HEK293 (cell line): ENCODE measurements at regions of chr16 and their contacts with region 1.

Region 1: DNA sequence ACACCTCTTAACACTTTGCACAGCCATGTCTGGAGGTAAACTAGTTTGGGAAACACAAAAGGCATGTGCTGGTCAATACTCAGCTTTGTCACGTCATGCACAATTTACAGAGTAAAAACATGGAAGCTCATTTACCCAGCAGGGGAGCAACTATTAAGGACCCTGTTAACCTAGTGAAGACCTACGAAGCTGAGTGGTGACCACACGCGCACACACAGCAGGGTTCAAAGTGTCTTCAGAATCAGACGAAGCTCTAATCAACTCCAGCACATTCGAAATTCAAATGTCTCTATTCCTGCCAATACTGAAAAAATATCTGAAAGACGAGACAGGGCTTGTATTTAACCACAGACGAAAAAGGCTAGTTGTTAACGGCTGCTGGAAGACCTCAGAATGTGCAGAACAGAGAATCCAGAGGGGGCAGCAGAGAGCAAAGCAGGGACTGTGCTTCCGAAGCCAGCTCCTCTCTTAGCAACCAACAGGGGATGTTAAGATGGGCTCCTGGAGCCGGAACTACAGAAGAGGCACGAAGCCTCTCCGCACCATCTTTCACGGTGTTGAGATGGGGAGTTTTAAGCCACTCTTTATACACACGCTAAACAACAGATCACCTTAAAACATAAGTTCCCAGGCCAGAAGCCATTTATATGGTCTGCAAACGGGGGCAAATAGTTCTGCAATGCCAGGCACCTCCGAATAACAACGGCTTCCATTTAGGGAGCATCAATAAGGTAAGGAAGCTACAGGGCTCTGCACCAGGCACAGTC is 45.7 kb downstream of the CMTM4 start:
- H3K4me3 ChIP-seq: no peak overlapping the region
- H3K27ac ChIP-seq: no peak overlapping the region; the same call in 1 of the 2 replicates
- H3K4me1 ChIP-seq: peaks cover 5% of the 10 kb centered on the region
- CTCF ChIP-seq: peak; percentile 87

Region 2: GRCh38 chr16:66483689-66484481 is 167.0 kb before region 1 on chr16:
- CTCF ChIA-PET with region 1: no interaction called
- POLR2A ChIA-PET with region 1: no interaction called
- H3K4me3 ChIP-seq: no peak overlapping the region
- H3K27ac ChIP-seq: no peak overlapping the region
- H3K4me1 ChIP-seq: no peaks in the 10 kb centered on the region
- CTCF ChIP-seq: peak; percentile 93

Region 3: DNA sequence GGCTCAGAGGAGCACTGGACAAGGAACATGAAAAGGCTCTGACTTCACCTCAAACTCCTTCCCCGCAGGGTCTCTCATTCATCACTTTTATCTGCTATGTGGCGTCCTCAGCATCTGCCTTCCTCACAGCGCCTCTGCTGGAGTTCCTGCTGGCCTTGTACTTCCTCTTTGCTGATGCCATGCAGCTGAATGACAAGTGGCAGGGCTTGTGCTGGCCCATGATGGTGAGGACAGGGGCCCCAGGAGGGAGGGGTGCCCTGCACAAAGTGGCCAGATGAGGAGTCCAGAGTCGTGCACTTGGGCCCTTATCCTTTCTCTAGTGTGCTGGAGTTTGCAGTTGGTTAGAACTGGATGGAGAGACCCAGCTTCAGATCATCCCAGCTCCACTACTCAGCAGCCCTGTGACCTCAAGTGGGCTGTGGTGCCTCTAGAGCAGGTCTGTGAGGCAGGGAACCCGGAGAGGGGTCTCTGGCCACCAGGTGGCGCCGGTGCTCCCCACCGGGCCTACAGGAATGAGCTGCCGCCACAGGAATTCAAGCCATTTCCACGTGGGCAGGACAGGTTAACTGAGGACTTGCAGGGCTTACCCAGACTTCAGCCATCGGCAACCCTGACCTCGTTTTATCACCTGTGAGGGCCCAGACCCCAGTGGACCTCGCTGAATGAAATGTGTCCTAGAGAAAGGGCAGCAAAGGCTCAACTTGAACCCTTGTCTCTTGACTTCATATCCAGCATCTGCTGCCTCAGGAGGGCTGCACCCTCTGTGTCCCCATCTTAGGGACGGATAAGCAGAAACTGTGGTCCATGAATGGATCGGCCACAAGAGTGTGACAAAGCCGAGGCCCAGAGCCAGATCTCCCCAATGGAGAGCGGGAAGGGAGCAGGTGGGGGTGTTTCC is 42.4 kb before region 1 on chr16:
- CTCF ChIA-PET with region 1: interaction called, 18 read pairs
- POLR2A ChIA-PET with region 1: no interaction called
- H3K4me3 ChIP-seq: no peak overlapping the region
- H3K27ac ChIP-seq: no peak overlapping the region
- H3K4me1 ChIP-seq: no peaks in the 10 kb centered on the region
- CTCF ChIP-seq: peak; percentile 93

Region 4: GRCh38 chr16:66618588-66619375 is 32.1 kb before region 1 on chr16:
- CTCF ChIA-PET with region 1: interaction called, 15 read pairs
- POLR2A ChIA-PET with region 1: no interaction called
- H3K4me3 ChIP-seq: no peak overlapping the region
- H3K27ac ChIP-seq: no peak overlapping the region
- H3K4me1 ChIP-seq: peaks cover 13% of the 10 kb centered on the region
- CTCF ChIP-seq: no peak

Region 5: DNA sequence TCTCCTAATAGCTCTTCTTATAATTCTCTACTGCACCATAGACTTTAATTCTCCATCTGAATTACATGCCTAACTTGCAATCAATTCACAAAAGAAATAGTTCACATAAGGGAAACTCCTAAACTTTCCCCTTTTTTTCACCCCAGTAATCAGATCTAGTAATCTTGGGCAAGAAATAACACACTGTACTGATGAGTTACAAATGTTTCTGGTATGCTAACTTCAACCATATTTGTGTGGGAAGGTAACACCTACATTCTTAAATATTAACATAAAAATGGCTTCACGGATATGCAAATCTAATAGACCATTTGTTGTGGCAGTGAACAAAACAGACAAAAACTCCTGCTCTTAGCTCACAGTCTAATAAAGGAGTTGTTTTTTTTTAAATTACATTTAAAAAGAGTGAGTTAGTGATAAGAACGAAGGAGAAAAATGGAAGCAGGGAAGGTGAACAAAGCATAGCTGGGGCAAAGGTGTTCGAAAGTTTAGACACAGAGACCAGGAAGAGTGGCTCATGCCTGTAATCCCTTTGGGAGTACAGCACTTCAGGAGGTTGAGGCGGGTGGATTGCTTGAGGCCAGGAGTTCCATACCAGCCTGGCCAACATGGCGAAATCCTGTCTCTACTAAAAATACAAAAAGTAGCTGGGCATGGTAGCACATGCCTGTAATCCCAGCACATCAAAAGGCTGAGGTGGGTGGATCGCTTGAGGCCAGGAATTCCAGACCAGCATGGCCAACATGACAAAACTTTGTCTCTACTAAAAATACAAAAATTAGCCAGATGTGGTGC is 11.6 kb before region 1 on chr16:
- CTCF ChIA-PET with region 1: interaction called, 32 read pairs
- POLR2A ChIA-PET with region 1: interaction called, 5 read pairs
- H3K4me3 ChIP-seq: no peak overlapping the region
- H3K27ac ChIP-seq: no peak overlapping the region
- H3K4me1 ChIP-seq: peaks cover 3% of the 10 kb centered on the region; the same call in 1 of the 2 replicates
- CTCF ChIP-seq: no peak

Region 6: GRCh38 chr16:66696669-66697630 is 46.1 kb after region 1 on chr16 and contains the start of gene CMTM4:
- CTCF ChIA-PET with region 1: interaction called, 23 read pairs
- POLR2A ChIA-PET with region 1: interaction called, 3 read pairs
- H3K4me3 ChIP-seq: peak within 1 kb of the TSS; percentile 75
- H3K27ac ChIP-seq: peak within 1 kb of the TSS; percentile 77; the same call in 1 of the 2 replicates
- H3K4me1 ChIP-seq: peaks cover 11% of the 10 kb centered on the region; the same call in 1 of the 2 replicates
- CTCF ChIP-seq: peak; percentile 79

Region 7: DNA sequence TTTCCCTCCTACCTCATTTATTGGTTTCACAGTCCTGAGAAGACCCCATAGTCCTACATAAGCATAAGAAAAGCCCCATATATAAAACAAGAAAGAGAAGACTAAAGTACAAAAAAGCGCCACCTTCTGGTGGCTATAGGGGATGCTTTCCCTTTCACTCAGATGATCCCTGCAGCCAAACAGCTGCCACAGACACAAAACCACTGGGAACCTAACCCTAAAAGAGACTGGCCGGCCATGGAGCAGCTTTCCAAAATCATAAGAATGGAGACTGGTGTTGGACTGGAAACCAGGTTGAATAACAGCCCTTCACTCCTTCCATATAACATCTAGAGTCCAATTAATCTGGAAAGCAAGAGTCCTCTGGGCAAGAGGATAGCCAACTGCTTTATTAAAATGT is 89.1 kb after region 1 on chr16:
- CTCF ChIA-PET with region 1: interaction called, 19 read pairs
- POLR2A ChIA-PET with region 1: no interaction called
- H3K4me3 ChIP-seq: no peak overlapping the region
- H3K27ac ChIP-seq: peak overlapping the region; percentile 38; the same call in 1 of the 2 replicates
- H3K4me1 ChIP-seq: peaks cover 14% of the 10 kb centered on the region
- CTCF ChIP-seq: 0 out of 2 replicates have a peak, but pooled peaks have one; percentile 15